ENCODE measurements at regions of chr5 and their contacts with region 1.

Region 1: DNA sequence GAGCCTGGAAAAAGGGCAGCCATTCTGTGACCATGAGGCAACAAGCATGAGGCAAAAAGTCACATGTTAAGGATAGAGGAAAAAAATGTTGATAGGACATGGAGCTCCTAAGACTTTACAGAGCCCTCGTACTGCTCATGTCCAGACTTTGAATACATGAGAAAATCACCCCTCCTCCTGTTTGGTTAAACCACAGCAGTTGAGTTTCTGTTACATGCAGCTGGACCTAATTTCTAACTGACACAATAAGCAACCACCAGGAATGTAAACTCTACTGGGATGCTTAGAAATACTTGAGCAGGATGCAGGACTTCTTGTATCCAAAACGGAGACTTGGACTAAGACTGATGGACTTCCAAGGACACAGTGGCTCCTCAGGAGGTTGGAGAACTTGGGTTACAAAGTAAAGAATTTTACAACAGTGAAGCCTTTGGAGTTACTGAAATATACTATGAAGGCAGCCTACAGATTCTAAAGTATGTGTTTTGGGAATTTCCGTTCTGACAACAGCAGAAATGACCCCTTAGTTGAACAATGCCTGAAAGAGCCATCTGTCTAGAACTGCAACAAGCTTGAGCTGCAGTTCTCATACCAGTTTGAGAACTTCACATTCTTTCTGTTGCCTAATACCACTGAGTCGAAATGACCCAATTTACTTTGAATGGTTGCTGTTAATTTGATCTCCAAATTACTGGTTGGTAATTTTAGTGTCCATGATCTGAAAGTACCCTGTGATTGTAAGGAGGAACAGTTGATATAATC is 268.9 kb downstream of the PIK3R1 start:
- DNase-seq: peak; percentile 95
- ATAC-seq: peak; percentile 90
- H3K4me3 ChIP-seq: no peak overlapping the region
- H3K27ac ChIP-seq: peak overlapping the region; percentile 87
- H3K4me1 ChIP-seq: peaks cover 5% of the 10 kb centered on the region
- H3K27me3 ChIP-seq: no peaks in the 10 kb centered on the region
- CTCF ChIP-seq: no peak
- POLR2A ChIP-seq: no peak
- RAD21 ChIP-seq: no peak

Region 2: GRCh38 chr5:68246802-68247201 is 237.7 kb before region 1 on chr5:
- CTCF ChIA-PET with region 1: no interaction called
- POLR2A ChIA-PET with region 1: no interaction called
- dilution Hi-C with region 1: no loop called
- in situ Hi-C with region 1: no loop called
- intact Hi-C with region 1: no loop called
- DNase-seq: no peak
- ATAC-seq: no peak
- H3K4me3 ChIP-seq: no peak overlapping the region
- H3K27ac ChIP-seq: no peak overlapping the region
- H3K4me1 ChIP-seq: peaks cover 9% of the 10 kb centered on the region
- H3K27me3 ChIP-seq: no peaks in the 10 kb centered on the region
- CTCF ChIP-seq: no peak
- POLR2A ChIP-seq: no peak
- RAD21 ChIP-seq: no peak

Region 3: DNA sequence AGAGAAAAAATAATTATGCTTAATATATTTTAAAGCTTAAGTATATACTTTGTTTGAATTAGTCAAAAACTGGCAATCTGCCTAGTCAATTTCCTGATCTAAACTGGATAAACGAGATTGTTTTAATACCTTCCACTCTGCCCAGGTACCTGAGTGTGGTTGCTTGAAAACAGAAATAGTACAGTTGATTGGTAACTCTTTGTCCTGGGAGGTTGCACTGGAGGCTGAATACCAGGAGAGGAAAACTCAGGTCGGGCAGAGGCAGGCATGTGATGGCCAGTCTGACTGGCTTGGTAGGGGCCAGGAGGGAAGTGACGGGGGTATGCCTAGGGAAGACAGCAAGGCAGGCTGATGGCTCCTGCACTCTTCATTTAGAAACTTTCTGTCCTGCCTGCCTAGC is 188.7 kb before region 1 on chr5:
- CTCF ChIA-PET with region 1: no interaction called
- POLR2A ChIA-PET with region 1: no interaction called
- dilution Hi-C with region 1: no loop called
- in situ Hi-C with region 1: no loop called
- intact Hi-C with region 1: loop called (anchors 1 kb)
- DNase-seq: no peak
- ATAC-seq: no peak
- H3K4me3 ChIP-seq: no peak overlapping the region
- H3K27ac ChIP-seq: no peak overlapping the region
- H3K4me1 ChIP-seq: peaks cover 6% of the 10 kb centered on the region
- H3K27me3 ChIP-seq: no peaks in the 10 kb centered on the region
- CTCF ChIP-seq: no peak
- POLR2A ChIP-seq: no peak
- RAD21 ChIP-seq: no peak

Region 4: GRCh38 chr5:68661237-68661636 is 176.7 kb after region 1 on chr5:
- CTCF ChIA-PET with region 1: no interaction called
- POLR2A ChIA-PET with region 1: no interaction called
- dilution Hi-C with region 1: no loop called
- in situ Hi-C with region 1: no loop called
- intact Hi-C with region 1: loop called (anchors 10 kb)
- DNase-seq: peak; percentile 22
- ATAC-seq: 0 out of 2 replicates have a peak, but pooled peaks have one; percentile 40
- H3K4me3 ChIP-seq: no peak overlapping the region
- H3K27ac ChIP-seq: no peak overlapping the region
- H3K4me1 ChIP-seq: no peaks in the 10 kb centered on the region
- H3K27me3 ChIP-seq: no peaks in the 10 kb centered on the region
- CTCF ChIP-seq: peak; percentile 32
- POLR2A ChIP-seq: no peak
- RAD21 ChIP-seq: peak; percentile 39

Region 5: DNA sequence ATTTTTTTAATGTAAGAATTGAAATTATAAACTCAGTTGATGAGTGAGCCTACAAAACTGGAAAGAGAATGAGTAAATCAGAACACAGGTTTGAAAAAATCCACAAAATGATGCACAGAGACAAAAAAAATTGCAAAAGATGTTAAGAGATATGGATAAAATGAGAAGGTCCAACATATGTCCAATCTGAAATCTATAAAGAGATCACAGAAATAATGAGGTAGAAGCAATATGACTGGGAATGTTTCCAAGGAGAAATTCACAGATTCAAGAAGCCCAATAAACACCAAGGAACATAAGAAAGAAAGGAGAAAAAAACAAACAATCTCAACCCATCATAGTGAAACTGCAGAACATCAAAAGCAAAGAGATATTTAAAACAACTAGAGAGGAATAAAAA is 321.0 kb after region 1 on chr5:
- CTCF ChIA-PET with region 1: no interaction called
- POLR2A ChIA-PET with region 1: no interaction called
- dilution Hi-C with region 1: no loop called
- in situ Hi-C with region 1: no loop called
- intact Hi-C with region 1: no loop called
- DNase-seq: no peak
- ATAC-seq: no peak
- H3K4me3 ChIP-seq: no peak overlapping the region
- H3K27ac ChIP-seq: no peak overlapping the region
- H3K4me1 ChIP-seq: no peaks in the 10 kb centered on the region
- H3K27me3 ChIP-seq: no peaks in the 10 kb centered on the region
- CTCF ChIP-seq: no peak
- POLR2A ChIP-seq: no peak
- RAD21 ChIP-seq: no peak

Measured in IMR-90 (cell line).